Activated naive CD4-positive, alpha-beta T cell treated with anti-CD3 and anti-CD28 coated beads for 36 hours (primary cell): ENCODE measurements at regions of chr3 and their contacts with region 1.

Region 1: DNA sequence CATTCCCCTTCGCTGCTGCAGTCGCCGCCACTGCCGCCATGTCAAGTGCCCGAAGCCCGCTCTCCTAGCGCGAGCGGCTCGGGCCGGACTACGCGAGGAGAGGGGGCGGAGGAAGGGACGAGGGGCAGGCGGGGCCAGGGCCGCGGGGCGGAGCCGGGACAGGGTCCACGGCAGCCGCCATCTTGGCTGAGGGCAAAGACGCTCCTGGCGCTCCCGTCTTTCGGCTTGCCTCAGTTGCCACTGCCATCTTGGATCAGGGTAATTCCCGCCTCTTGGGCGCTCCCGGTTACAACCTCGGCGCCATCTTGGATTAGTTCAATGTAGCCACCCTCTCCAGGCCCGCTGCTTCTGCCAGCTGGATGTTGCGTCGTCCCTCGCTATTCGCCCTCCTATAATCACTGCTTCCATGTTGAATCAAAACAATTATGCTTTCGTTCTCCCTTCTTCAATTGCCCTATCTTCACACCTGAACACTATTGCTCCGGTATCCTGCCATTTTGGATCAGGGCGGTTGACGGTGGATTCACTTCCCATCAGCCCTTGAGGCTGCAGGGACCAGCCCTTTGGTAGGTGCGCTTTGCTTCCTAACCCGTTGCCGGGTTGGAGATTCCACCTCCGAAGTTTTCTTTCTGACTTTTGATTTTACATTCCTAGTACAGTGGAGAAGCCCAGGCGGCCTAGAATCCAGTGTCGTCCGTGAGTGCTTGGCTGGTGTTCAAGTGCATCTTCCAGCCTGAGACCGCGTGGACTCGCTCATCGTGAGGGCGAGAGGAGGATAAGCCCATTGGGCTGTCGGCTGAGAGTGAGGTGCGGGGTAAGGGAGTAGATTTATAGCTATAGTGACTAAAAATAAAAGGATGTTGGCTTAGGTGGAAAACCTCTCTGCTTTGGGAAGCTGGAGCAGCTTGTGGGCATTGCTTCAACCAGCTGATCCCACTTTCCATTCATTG is at the start of gene HACD2:
- DNase-seq: peak; percentile 96
- H3K4me3 Mint-ChIP-seq: no peak within 1 kb of the TSS
- H3K27ac Mint-ChIP-seq: peak within 1 kb of the TSS; percentile 57
- H3K4me1 Mint-ChIP-seq: peaks cover 22% of the 10 kb centered on the region
- H3K27me3 Mint-ChIP-seq: no peaks in the 10 kb centered on the region
- total RNA-seq, gene HACD2: 25.9 TPM

Region 2: GRCh38 chr3:122793568-122794416 is 791.5 kb before region 1 on chr3 and contains the start of gene HSPBAP1:
- CTCF ChIA-PET with region 1: no interaction called
- intact Hi-C with region 1: loop called (anchors 1 kb)
- DNase-seq: peak; percentile 92
- H3K4me3 Mint-ChIP-seq: peak within 1 kb of the TSS; percentile 86
- H3K27ac Mint-ChIP-seq: peak within 1 kb of the TSS; percentile 80
- H3K4me1 Mint-ChIP-seq: peaks cover 30% of the 10 kb centered on the region
- H3K27me3 Mint-ChIP-seq: no peaks in the 10 kb centered on the region
- total RNA-seq, gene HSPBAP1: 3.0 to 3.2 TPM

Region 3: GRCh38 chr3:122982216-122983185 is 602.8 kb before region 1 on chr3:
- CTCF ChIA-PET with region 1: no interaction called
- intact Hi-C with region 1: no loop called
- DNase-seq: no peak
- H3K4me3 Mint-ChIP-seq: no peak overlapping the region
- H3K27ac Mint-ChIP-seq: no peak overlapping the region
- H3K4me1 Mint-ChIP-seq: no peaks in the 10 kb centered on the region
- H3K27me3 Mint-ChIP-seq: peaks cover 3% of the 10 kb centered on the region

Region 4: GRCh38 chr3:123066896-123067688 is 518.2 kb before region 1 on chr3 and contains the start of gene PDIA5:
- CTCF ChIA-PET with region 1: no interaction called
- intact Hi-C with region 1: loop called (anchors 2 kb)
- DNase-seq: peak; percentile 83
- H3K4me3 Mint-ChIP-seq: peak within 1 kb of the TSS; percentile 81
- H3K27ac Mint-ChIP-seq: peak within 1 kb of the TSS; percentile 40
- H3K4me1 Mint-ChIP-seq: peaks cover 34% of the 10 kb centered on the region
- H3K27me3 Mint-ChIP-seq: no peaks in the 10 kb centered on the region
- total RNA-seq, gene PDIA5: 20.7 to 21.2 TPM

Region 5: DNA sequence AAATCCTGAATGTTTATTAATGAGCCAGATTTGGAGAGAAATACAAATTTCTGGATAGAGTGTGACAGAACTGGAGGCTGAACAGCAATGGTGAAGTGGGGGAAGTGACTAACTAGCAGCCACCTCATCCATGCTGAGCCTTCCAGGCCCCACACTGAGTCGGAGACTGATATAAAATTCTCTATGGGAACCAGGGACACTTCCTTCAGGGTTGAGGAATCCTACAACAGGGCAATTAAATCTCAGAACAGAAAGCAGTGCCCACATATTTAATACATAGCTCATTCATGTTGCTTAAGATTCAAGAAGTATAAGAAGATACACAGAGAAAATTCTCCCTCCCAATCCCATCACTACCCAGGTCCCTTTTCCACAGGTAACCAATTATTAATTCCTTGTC is 49.7 kb before region 1 on chr3:
- CTCF ChIA-PET with region 1: no interaction called
- intact Hi-C with region 1: loop called (anchors 1 kb)
- DNase-seq: no peak
- H3K4me3 Mint-ChIP-seq: no peak overlapping the region
- H3K27ac Mint-ChIP-seq: no peak overlapping the region
- H3K4me1 Mint-ChIP-seq: peaks cover 19% of the 10 kb centered on the region
- H3K27me3 Mint-ChIP-seq: no peaks in the 10 kb centered on the region

Region 6: GRCh38 chr3:123559040-123559861 is 26.0 kb before region 1 on chr3:
- CTCF ChIA-PET with region 1: interaction called, 5 read pairs
- intact Hi-C with region 1: loop called (anchors 2 kb)
- DNase-seq: no peak
- H3K4me3 Mint-ChIP-seq: no peak overlapping the region
- H3K27ac Mint-ChIP-seq: no peak overlapping the region
- H3K4me1 Mint-ChIP-seq: peaks cover 18% of the 10 kb centered on the region
- H3K27me3 Mint-ChIP-seq: no peaks in the 10 kb centered on the region

Region 7: DNA sequence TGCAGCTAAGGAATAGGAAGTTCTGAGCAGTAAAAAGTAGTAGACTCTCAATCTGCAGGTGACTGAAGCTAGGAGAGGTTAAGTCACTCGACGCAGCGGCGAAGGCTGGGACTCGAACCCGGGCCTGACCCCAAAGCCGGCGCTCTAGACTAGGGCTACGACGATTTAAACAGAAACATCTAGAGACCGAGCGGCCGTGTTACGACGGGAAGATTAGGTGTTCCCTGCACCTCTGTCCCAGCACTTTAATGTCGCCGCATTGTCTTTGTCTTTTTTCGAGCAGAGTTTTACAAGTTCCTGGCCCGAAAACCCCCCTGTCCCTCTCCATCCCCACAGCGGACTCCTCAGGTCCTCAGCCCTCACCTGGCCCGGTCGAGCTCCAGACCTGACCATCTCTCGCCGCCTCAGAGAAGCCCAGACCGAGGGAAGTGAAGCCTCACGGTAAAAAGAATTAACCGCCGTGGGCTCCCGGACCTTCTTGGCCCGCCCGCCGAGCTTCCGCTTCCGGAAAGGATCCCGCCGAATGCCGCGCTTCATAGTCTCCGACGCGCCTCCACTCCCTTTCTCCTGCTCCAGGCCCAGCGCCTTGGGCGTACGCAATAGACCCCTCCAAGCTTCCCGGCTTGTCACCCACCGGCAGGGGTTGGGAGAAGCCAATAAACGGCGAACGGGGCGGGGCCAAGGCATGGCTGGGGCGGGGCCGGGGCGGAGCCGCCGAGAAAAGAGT is 375.7 kb after region 1 on chr3 and contains the start of gene CCDC14:
- CTCF ChIA-PET with region 1: no interaction called
- intact Hi-C with region 1: loop called (anchors 1 kb)
- DNase-seq: peak; percentile 86
- H3K4me3 Mint-ChIP-seq: peak within 1 kb of the TSS; percentile 96
- H3K27ac Mint-ChIP-seq: peak within 1 kb of the TSS; percentile 88
- H3K4me1 Mint-ChIP-seq: peaks cover 19% of the 10 kb centered on the region
- H3K27me3 Mint-ChIP-seq: peaks cover 2% of the 10 kb centered on the region
- total RNA-seq, gene CCDC14: 44.8 to 48.4 TPM

Region 8: GRCh38 chr3:124730129-124730940 is 1145.1 kb after region 1 on chr3 and contains the start of gene UMPS:
- CTCF ChIA-PET with region 1: no interaction called
- intact Hi-C with region 1: loop called (anchors 5 kb)
- DNase-seq: peak; percentile 96
- H3K4me3 Mint-ChIP-seq: peak within 1 kb of the TSS; percentile 99
- H3K27ac Mint-ChIP-seq: peak within 1 kb of the TSS; percentile 95
- H3K4me1 Mint-ChIP-seq: peaks cover 33% of the 10 kb centered on the region
- H3K27me3 Mint-ChIP-seq: peaks cover 7% of the 10 kb centered on the region
- total RNA-seq, gene UMPS: 29.6 to 34.1 TPM